ENCODE measurements at regions of chr17 and their contacts with region 1.

Region 1: DNA sequence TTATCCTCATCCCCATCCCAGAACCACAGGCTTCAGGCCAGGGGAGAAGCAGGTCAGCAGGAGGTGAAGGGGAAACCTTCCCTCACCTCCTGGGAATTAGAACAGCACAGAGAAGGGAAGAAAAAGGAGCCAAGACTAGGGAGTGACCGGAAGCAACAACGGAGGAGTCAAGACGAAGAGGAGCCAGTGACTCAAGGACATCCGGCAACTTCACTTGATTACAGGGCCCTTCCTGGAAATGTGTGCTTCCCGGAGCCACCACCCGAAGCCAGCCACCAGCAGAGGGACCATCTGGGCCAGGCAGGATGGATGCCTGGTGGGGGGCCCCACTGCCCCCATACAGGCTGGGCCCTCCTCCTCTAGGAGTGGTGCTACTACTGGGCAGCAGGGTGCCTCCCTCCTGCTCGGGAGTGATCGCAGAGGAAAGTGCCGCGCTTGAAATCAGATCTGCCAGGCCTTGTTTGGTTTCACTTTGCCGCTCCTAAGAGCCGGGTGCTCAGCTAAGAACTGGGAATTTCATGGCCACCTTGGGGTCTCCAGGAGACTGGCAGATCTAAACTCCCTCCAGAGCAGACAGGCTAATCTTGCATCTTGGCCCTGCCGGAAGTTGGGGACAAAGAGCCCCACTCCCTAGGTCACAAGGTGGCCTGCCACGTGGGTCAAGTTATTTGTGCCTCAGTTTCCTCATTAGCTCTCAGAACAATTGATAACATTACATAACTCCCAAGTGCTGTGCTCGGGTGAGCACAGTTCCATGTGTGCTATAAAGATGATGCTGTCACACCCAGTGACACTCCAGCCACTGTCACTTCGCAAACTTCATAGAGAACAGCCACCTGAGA is 6.6 kb downstream of the CDC42EP4 start:
- DNase-seq: peak; percentile 84
- H3K4me3 ChIP-seq: peak overlapping the region; percentile 15 to 44 (median 35)
- H3K27ac ChIP-seq: peak overlapping the region; percentile 99 to 100 (median 100)
- H3K4me1 ChIP-seq: peaks cover 0 to 97% (median 94%) of the 10 kb centered on the region in 4 donors
- H3K27me3 ChIP-seq: no peaks in the 10 kb centered on the region
- CTCF ChIP-seq: peak in 1 of 4 experiments; percentile 22
- EP300 ChIP-seq: peak in 2 of 4 donors; percentile 18 to 70
- POLR2A ChIP-seq: no peak

Region 2: GRCh38 chr17:73291260-73291801 is 13.9 kb before region 1 on chr17:
- intact Hi-C with region 1: loop called (anchors 2 kb)
- DNase-seq: peak; percentile 85
- H3K4me3 ChIP-seq: peak overlapping the region in 1 of 4 donors; percentile 12
- H3K27ac ChIP-seq: peak overlapping the region; percentile 76 to 100 (median 86)
- H3K4me1 ChIP-seq: peaks cover 0 to 97% (median 92%) of the 10 kb centered on the region in 4 donors
- H3K27me3 ChIP-seq: no peaks in the 10 kb centered on the region
- CTCF ChIP-seq: no peak
- EP300 ChIP-seq: peak in 1 of 4 donors; percentile 10
- POLR2A ChIP-seq: no peak

Region 3: DNA sequence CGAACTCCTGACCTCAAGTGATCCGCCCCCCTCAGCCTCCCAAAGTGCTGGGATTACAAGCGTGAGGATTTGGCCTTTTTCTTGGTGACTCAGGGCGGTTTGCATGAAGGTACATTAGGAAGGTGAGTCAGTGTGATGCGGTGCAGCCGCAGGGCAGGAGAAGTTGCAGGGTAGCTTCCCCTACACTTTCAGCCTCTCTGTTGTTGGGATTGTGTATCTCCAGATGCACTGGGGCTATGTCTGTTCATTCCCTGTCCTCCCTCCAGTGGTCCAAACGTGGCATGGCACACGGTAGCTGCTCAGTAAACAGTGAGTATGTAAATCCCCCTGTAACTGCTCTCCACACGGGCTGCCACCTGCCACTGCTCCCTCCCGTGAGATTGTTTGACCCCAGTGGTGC is 115.7 kb after region 1 on chr17:
- intact Hi-C with region 1: no loop called
- DNase-seq: peak; percentile 28
- H3K4me3 ChIP-seq: no peak overlapping the region
- H3K27ac ChIP-seq: no peak overlapping the region
- H3K4me1 ChIP-seq: no peaks in the 10 kb centered on the region
- H3K27me3 ChIP-seq: no peaks in the 10 kb centered on the region
- CTCF ChIP-seq: no peak
- EP300 ChIP-seq: no peak
- POLR2A ChIP-seq: no peak